ENCODE measurements at regions of chr15 and their contacts with region 1.

Region 1: GRCh38 chr15:55434989-55435825 is 26.9 kb downstream of the PIERCE2 start:
- DNase-seq: no peak
- ATAC-seq: peak; percentile 76
- H3K4me3 Mint-ChIP-seq: no peak overlapping the region
- H3K27ac Mint-ChIP-seq: no peak overlapping the region
- H3K4me1 Mint-ChIP-seq: peaks cover 7% of the 10 kb centered on the region
- H3K27me3 Mint-ChIP-seq: peaks cover 2% of the 10 kb centered on the region

Region 2: GRCh38 chr15:55318588-55319494 is 116.4 kb before region 1 on chr15 and contains the starts of genes PIGB and PIGBOS1:
- CTCF ChIA-PET with region 1: interaction called, 19 read pairs
- DNase-seq: peak; percentile 90
- ATAC-seq: peak; percentile 94
- H3K4me3 Mint-ChIP-seq: peak within 1 kb of the TSS; percentile 94
- H3K27ac Mint-ChIP-seq: peak within 1 kb of the TSS; percentile 99
- H3K4me1 Mint-ChIP-seq: peaks cover 51% of the 10 kb centered on the region
- H3K27me3 Mint-ChIP-seq: no peaks in the 10 kb centered on the region
- total RNA-seq, gene PIGB: 29.8 to 31.2 TPM
- total RNA-seq, gene PIGBOS1: 13.2 to 14.3 TPM

Region 3: DNA sequence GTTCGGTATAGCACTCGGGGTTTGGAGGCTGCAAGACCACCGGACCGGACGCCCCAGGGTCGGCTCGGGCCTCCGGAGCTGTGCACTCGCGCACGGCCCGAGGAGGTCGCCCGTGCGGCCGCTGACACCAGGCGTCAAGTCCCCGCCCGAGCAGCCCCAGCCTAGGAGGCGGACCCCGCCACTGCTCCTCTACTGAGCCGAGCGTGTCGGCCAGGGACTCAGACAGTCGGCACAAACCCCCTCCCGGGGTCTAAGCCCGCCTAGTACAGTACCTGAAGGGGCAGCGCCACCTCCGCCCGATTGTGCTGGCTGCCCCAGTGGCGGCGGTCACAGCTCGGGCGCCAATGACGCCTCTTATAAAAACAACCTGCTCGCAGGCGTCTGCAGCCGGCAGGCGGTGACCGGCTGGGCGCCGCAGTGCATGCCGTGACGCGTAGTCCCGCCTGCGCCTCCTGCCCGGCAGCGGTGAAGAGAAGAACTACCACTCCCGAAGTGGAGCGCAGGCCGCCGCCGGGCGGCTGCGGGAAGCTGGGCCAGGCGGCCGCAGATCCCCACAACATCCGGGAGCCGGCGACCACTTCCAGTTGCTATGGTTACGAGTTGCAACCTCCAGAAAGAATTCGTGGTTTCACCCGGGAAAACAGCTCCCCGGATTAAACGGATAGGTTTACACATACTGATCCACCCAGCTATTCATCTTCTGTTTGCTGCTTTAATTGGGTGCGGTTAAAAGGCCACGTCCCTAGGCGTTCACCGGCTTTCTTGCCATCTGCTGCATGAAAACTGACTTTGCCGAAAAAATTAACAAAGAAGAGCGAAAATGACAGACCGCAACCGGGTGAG is 27.0 kb before region 1 on chr15 and contains the starts of genes CCPG1 and PIERCE2:
- CTCF ChIA-PET with region 1: interaction called, 19 read pairs
- DNase-seq: peak; percentile 95
- ATAC-seq: peak; percentile 96
- H3K4me3 Mint-ChIP-seq: peak within 1 kb of the TSS; percentile 90
- H3K27ac Mint-ChIP-seq: peak within 1 kb of the TSS; percentile 86
- H3K4me1 Mint-ChIP-seq: peaks cover 32% of the 10 kb centered on the region
- H3K27me3 Mint-ChIP-seq: no peaks in the 10 kb centered on the region
- total RNA-seq, gene CCPG1: 19.2 to 22.0 TPM
- total RNA-seq, gene PIERCE2: not detected